Ovary (tissue), 10 donors: ENCODE measurements at regions of chr22 and their contacts with region 1.

Region 1: DNA sequence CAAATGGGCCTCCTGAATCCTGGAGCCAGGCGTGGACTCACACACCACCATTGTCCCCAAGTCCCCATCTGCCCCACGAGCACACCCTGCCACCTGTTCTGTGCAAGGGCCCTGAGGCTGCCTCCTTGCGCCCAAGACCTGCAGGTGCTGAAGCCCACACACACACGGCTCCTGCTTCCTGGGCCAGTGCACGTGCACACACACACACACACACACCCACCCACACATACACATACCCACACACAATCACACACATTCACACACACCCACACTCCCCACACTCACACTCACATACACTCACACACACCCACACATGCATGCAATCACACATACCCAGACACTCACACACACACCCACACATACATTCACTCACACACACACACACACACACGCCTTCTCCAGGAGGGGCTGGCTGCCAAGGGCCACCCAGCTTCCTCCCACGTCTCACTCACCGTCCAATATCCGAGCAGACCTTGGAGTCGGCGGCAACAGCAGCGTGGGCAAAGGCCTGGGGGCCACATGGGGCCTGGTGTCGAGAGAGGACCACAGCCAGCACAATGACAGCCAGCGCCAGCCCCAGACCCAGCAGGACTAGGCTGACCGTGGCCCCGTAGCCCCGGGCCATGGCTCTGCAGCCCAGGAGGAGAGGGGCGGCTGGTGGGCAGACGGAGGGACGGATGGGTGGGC is 638 bp downstream of the GGT5 start:
- DNase-seq: peak; percentile 54 to 73 (median 61)
- H3K4me3 ChIP-seq: peak overlapping the region; percentile 30
- H3K27ac ChIP-seq: peak overlapping the region; percentile 1 to 93
- H3K4me1 ChIP-seq: peaks cover 21% of the 10 kb centered on the region
- H3K27me3 ChIP-seq: no peaks in the 10 kb centered on the region
- CTCF ChIP-seq: no peak
- EP300 ChIP-seq: no peak
- POLR2A ChIP-seq: no peak

Region 2: GRCh38 chr22:23533328-23533762 is 710.9 kb before region 1 on chr22:
- intact Hi-C with region 1: no loop called
- DNase-seq: peak in 4 of 5 donors; percentile 54 to 74 (median 58)
- H3K4me3 ChIP-seq: no peak overlapping the region
- H3K27ac ChIP-seq: peak overlapping the region; percentile 77 to 88
- H3K4me1 ChIP-seq: peaks cover 45% of the 10 kb centered on the region
- H3K27me3 ChIP-seq: no peaks in the 10 kb centered on the region
- CTCF ChIP-seq: peak in 2 of 3 donors; percentile 30 to 54
- EP300 ChIP-seq: no peak
- POLR2A ChIP-seq: no peak

Region 3: GRCh38 chr22:24189249-24190158 is 54.7 kb before region 1 on chr22:
- intact Hi-C with region 1: loop called (anchors 5 kb)
- DNase-seq: peak; percentile 72 to 84 (median 80)
- H3K4me3 ChIP-seq: no peak overlapping the region
- H3K27ac ChIP-seq: no peak overlapping the region
- H3K4me1 ChIP-seq: peaks cover 5% of the 10 kb centered on the region
- H3K27me3 ChIP-seq: no peaks in the 10 kb centered on the region
- CTCF ChIP-seq: peak; percentile 75 to 97 (median 91)
- EP300 ChIP-seq: no peak
- POLR2A ChIP-seq: peak; percentile 32

Region 4: DNA sequence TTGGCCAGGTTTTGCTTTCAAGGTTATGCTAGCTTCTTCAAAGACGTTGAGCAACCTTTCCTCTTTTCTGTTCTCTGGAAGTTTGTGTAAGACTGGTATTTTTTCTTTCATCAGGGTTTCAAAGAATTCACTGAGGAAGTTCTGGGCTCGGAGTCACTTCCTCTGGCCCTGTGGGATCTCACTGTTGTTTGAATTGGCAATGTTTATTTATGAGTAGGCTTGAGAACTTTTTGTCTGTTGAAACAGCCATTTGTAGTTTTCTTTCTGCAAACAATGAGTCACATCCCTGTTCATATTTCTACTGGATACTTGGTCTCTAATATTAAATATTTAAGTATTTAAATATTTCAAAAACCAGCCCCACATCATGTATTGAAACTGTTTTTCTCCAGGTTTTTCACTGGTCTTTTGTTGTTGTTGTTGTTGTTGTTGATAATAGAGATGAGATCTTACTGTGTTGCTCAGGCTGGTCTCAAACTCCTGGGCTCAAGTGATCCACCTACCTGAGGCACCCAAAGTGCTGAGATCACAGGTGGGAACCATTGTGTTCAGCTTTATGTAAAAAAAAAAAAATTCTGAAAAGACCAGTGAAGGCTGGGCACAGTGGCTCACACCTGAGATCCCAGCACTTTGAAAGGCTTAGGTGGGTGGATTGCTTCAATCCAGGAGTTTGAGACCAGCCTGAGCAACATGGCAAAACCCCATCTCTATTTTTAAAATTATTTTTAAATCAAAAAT is 36.1 kb before region 1 on chr22:
- intact Hi-C with region 1: loop called in 1 of 4 experiments (anchors 5 kb)
- DNase-seq: peak in 2 of 5 donors; percentile 36 to 66
- H3K4me3 ChIP-seq: no peak overlapping the region
- H3K27ac ChIP-seq: peak overlapping the region in 1 of 2 donors; percentile 17
- H3K4me1 ChIP-seq: peaks cover 3% of the 10 kb centered on the region
- H3K27me3 ChIP-seq: no peaks in the 10 kb centered on the region
- CTCF ChIP-seq: no peak
- EP300 ChIP-seq: no peak
- POLR2A ChIP-seq: no peak